ENCODE measurements at regions of chr9 and their contacts with region 1.

Region 1: DNA sequence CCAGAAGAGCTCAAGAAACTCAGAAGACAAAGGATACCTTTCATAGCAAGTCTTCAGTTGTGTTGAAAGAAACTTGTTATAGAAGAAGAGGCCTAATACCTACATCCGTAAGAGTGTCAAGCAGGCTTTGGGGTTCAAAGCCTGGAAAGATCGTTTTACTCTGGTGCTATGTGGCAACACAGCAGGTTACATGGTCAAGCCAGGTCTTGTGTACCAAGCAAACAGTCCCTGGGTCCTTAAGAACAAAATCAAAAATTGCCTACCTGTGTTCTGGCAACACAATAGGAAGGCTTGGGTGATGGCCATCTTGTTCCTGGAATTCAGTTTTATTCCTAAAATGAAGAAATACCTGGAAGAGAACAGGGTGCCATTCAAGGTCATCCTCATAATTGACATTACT is 32.0 kb upstream of the LRRC19 start:
- DNase-seq: no peak
- ATAC-seq: no peak
- H3K4me3 ChIP-seq: no peak overlapping the region
- H3K27ac ChIP-seq: no peak overlapping the region
- H3K4me1 ChIP-seq: no peaks in the 10 kb centered on the region
- H3K27me3 ChIP-seq: no peaks in the 10 kb centered on the region
- CTCF ChIP-seq: no peak

Region 2: DNA sequence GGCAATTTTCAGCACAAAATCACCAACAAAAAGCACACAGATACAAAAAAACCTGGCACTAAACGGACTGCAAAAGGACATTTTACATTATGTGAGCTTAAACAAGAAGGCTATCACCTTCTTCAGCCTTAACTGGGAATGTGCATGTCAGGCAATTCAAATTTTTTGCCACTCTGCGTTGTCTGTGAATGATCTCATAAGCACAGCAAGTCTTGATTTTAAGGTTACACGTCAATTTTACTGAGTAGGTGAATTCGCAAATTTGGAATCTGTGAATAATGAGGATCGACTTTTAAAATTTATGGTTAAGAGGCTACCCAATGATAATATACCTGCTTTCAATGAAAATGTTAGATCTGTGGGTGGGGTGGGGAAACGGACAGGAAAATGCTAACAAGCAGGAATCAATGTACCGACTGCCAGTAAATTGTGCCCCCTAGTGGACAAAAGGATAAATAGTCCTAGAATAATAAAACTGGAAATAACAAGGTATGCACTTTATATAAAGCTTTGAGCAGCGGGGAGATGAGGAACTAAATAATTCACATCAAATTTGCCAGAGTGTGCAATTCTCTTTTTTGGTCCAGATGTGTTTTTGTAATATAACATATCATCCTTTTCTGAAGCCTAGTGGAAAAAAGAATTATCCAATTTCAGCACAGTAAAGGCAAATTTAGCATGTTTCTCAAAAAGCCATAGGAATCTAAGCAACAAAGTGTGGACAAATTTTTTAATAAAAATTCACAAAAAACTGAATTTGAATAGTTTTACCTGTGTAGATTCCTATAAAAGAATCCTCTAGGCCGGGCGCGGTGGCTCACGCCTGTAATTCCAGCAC is 238.9 kb after region 1 on chr9:
- intact Hi-C with region 1: loop called in 1 of 2 experiments (anchors 5 kb)
- DNase-seq: peak in 2 of 4 donors; percentile 67 to 68
- ATAC-seq: peak; percentile 90
- H3K4me3 ChIP-seq: no peak overlapping the region
- H3K27ac ChIP-seq: no peak overlapping the region
- H3K4me1 ChIP-seq: peaks cover 0 to 6% of the 10 kb centered on the region in 2 donors
- H3K27me3 ChIP-seq: no peaks in the 10 kb centered on the region
- CTCF ChIP-seq: peak; percentile 61 to 78

Measured in left lung (tissue), 14 donors.